ENCODE measurements at regions of chr12 and their contacts with region 1.

Region 1: DNA sequence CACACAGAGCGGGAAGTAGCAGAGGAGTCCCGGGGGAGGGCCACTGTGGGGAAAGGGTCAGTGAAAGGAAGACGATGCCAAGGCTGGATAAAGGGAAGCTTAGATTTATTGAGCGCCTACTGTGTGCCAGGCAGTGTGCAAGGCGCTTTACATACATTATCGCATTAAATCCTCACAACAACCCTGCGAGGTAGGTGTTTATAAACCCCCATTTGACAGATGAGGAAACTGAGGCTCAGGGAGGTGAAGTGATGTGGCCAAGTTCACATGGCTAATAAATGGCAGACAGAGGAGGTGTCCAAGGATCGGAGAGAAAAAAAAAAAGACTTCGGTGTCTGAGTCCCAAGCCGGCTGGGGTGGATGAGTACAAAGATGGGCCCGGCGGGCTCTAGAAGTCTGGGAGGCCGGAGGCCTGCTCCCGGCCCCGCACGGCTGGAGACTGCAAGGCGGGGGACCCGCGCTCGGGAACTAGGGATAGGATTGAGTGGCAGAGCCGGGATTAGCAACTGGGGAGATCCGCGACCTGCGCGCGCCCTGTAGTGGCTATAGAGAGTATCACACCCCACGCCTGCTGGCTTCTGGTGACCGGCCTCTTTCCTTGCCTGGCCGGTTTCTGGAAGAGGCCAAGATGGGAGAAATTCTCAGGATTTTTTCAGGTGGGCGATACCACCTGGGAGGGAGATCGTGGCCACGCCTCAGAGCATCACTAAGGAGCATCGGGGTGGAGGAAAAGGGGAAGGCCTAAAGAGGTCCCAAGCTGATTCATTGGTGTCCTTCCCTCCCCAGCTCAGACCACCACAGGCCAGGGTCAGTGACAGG is 3.9 kb downstream of the DDN start:
- DNase-seq: peak; percentile 71
- ATAC-seq: no peak
- H3K4me3 Mint-ChIP-seq: no peak overlapping the region
- H3K27ac Mint-ChIP-seq: no peak overlapping the region
- H3K4me1 Mint-ChIP-seq: peaks cover 24% of the 10 kb centered on the region
- H3K27me3 Mint-ChIP-seq: peaks cover 39% of the 10 kb centered on the region
- CTCF ChIP-seq: peak; percentile 84

Region 2: DNA sequence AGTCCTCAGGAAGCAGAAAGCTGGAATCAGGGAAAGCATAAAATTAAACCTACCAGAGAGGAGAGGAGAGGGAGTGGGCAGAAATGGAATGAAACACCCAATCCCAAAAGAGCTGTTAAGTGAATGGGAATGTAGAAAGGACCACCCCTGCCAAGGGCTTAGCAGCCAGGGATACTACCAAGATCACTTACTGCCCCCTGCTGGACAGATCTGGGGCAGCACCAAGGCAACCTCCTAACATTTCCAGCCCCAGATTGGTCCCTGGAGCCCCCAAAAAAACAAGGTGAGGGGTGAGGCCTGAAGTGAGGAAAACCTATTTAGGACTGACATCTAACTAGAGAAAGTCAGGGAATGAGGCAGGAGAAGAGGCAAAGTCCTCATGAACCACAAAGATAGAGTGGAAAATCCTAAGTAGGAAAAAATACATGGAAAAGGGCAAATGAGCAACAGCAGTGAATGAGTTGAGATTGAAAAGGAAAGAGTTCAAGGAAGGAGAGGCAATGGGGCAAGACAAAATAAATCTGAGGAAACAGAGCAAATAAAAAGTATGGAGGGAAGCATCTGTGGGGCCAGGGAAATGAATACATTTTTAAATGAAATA is 58.8 kb before region 1 on chr12:
- CTCF ChIA-PET with region 1: interaction called, 896 read pairs
- POLR2A ChIA-PET with region 1: interaction called, 3 read pairs
- intact Hi-C with region 1: no loop called
- DNase-seq: peak; percentile 92
- ATAC-seq: peak; percentile 79
- H3K4me3 Mint-ChIP-seq: no peak overlapping the region
- H3K27ac Mint-ChIP-seq: no peak overlapping the region
- H3K4me1 Mint-ChIP-seq: peaks cover 24% of the 10 kb centered on the region
- H3K27me3 Mint-ChIP-seq: no peaks in the 10 kb centered on the region
- CTCF ChIP-seq: peak; percentile 86

Region 3: DNA sequence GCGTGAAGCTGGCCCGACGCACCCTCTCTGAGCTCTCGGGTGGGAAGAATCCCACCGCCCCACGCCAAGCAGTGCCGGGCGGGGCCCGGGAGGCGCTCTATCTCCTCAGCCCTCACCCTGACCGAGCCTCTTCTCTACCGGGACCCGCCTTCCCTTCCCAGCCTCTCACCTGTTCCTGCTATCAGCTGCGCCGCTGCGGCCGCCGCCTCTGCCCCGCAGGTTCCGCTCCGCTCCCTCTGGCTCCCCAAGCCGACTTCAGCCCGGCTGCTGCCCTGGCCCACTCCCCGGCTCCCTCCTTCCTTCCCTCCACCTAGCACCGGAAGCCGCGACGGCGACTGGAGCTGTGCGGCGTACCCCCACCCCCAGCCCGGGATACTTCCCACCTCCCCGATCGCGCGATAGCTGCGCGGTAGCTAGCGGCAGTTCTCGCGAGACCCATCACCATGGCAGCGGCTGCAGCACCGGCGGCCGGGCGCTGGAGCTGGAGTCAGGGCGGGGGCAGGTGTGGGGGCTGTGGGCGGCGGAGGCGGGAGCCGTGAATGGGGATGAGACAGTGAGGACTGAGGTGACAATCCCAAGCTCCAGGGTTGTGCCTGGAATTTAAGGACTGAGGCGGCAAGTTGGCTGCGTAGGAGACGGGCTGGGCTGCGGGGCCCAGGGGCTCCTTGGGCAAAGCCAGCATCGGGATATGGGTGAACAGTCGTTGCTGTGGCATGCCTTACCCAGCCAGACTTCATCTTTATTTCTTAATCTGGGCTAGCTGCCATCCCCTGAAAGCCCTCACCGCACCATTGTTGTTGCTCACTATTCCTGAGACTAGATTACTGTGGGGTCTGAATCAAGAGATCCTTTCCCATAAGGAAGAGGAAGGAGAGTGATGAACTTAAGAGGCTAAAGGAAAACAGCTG is 37.9 kb before region 1 on chr12 and contains the start of gene ARF3:
- CTCF ChIA-PET with region 1: interaction called, 896 read pairs
- POLR2A ChIA-PET with region 1: no interaction called
- intact Hi-C with region 1: no loop called
- DNase-seq: peak; percentile 94
- ATAC-seq: peak; percentile 96
- H3K4me3 Mint-ChIP-seq: peak within 1 kb of the TSS; percentile 96
- H3K27ac Mint-ChIP-seq: peak within 1 kb of the TSS; percentile 87
- H3K4me1 Mint-ChIP-seq: peaks cover 25% of the 10 kb centered on the region
- H3K27me3 Mint-ChIP-seq: peaks cover 7% of the 10 kb centered on the region
- CTCF ChIP-seq: no peak
- total RNA-seq, gene ARF3: 58.3 to 67.6 TPM

Region 4: GRCh38 chr12:48977315-48978281 is 17.7 kb before region 1 on chr12:
- CTCF ChIA-PET with region 1: interaction called, 896 read pairs
- POLR2A ChIA-PET with region 1: interaction called, 14 read pairs
- intact Hi-C with region 1: no loop called
- DNase-seq: peak; percentile 88
- ATAC-seq: peak; percentile 60
- H3K4me3 Mint-ChIP-seq: peak overlapping the region; percentile 3
- H3K27ac Mint-ChIP-seq: peak overlapping the region; percentile 51
- H3K4me1 Mint-ChIP-seq: peaks cover 52% of the 10 kb centered on the region
- H3K27me3 Mint-ChIP-seq: peaks cover 63% of the 10 kb centered on the region
- CTCF ChIP-seq: peak; percentile 97

Region 5: DNA sequence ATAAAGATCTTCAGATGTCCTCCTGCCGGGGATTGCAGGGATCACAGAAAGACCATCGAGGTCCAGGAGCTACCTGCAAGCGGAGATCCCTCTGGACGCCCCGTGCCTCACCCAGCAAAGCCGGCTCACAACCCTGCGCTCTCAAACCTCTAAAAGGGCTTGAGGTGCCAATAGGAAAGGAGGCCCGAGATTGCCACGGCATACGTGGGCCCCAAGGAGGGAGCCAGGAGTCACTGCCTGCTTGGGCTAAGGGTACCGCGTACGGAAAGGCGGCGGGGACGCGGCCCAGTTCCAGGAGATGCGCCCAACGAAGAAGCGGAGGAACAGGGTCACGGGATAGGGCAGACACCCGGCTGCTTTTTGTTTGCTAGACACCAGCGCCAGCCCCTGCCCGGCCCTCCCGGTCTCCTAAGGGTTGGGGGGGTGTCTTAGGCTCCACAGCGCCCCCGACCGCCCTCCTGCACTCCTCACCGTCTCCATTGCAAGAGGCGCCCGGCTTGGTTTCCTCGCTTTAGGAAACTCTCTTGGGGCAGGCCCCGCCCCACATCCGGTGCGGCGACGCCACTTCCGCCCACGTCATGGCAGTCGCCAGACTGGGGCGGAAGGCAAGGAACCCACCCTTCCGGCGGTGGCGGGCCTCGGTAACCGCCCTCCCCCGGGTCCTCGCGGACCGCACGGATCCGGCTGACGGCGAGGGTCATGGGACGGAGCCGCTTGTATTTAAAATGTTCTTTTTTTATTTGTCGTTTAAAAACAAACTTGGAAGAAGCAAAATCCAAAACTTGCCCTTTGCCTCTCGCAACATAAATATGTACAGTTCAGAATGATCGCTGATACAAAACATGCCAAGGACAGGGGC is 23.2 kb after region 1 on chr12 and contains the start of gene PRKAG1:
- CTCF ChIA-PET with region 1: interaction called, 57 read pairs
- POLR2A ChIA-PET with region 1: interaction called, 10 read pairs
- intact Hi-C with region 1: no loop called
- DNase-seq: peak; percentile 96
- ATAC-seq: peak; percentile 90
- H3K4me3 Mint-ChIP-seq: peak within 1 kb of the TSS; percentile 95
- H3K27ac Mint-ChIP-seq: peak within 1 kb of the TSS; percentile 98
- H3K4me1 Mint-ChIP-seq: peaks cover 23% of the 10 kb centered on the region
- H3K27me3 Mint-ChIP-seq: no peaks in the 10 kb centered on the region
- CTCF ChIP-seq: peak; percentile 57
- total RNA-seq, gene PRKAG1: 43.3 to 47.3 TPM

Region 6: DNA sequence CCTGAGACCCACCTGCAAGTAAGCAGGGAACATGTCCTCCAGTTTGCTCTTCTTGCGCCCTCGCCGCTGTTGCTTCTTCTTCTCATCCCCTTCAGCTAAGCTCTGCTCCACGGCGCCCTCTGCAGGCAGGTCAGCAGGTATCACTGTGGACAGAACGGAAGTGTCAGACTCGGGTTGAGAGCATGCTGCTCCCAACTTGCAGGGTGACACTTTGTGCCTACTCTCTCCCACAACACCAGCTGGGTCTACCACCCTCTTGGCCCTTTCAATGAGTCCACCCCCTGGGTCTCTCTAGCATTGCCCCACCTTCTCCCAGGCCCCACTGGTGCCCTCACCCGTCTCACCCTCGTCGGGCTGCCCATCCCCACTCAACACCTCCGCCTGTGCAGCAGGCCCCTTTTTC is 48.6 kb after region 1 on chr12:
- CTCF ChIA-PET with region 1: interaction called, 39 read pairs
- POLR2A ChIA-PET with region 1: interaction called, 3 read pairs
- intact Hi-C with region 1: no loop called
- DNase-seq: peak; percentile 84
- ATAC-seq: peak; percentile 94
- H3K4me3 Mint-ChIP-seq: no peak overlapping the region
- H3K27ac Mint-ChIP-seq: no peak overlapping the region
- H3K4me1 Mint-ChIP-seq: no peaks in the 10 kb centered on the region
- H3K27me3 Mint-ChIP-seq: no peaks in the 10 kb centered on the region
- CTCF ChIP-seq: peak; percentile 86

Region 7: GRCh38 chr12:49260166-49260565 is 264.9 kb after region 1 on chr12:
- CTCF ChIA-PET with region 1: no interaction called
- POLR2A ChIA-PET with region 1: no interaction called
- intact Hi-C with region 1: no loop called
- DNase-seq: no peak
- ATAC-seq: no peak
- H3K4me3 Mint-ChIP-seq: no peak overlapping the region
- H3K27ac Mint-ChIP-seq: no peak overlapping the region
- H3K4me1 Mint-ChIP-seq: peaks cover 10% of the 10 kb centered on the region
- H3K27me3 Mint-ChIP-seq: peaks cover 1% of the 10 kb centered on the region
- CTCF ChIP-seq: no peak